Prostate gland (tissue), 2 donors: ENCODE measurements at regions of chr5 and their contacts with region 1.

Region 1: GRCh38 chr5:61331407-61332357 is at the start of gene ZSWIM6:
- DNase-seq: peak; percentile 100
- H3K4me3 ChIP-seq: peak within 1 kb of the TSS; percentile 95 to 97
- H3K27ac ChIP-seq: peak within 1 kb of the TSS; percentile 97 to 98
- H3K4me1 ChIP-seq: no peaks in the 10 kb centered on the region
- H3K27me3 ChIP-seq: no peaks in the 10 kb centered on the region
- CTCF ChIP-seq: peak in 1 of 4 experiments; percentile 14
- POLR2A ChIP-seq: peak; percentile 94
- total RNA-seq, gene ZSWIM6: 8.7 to 13.7 TPM

Region 2: DNA sequence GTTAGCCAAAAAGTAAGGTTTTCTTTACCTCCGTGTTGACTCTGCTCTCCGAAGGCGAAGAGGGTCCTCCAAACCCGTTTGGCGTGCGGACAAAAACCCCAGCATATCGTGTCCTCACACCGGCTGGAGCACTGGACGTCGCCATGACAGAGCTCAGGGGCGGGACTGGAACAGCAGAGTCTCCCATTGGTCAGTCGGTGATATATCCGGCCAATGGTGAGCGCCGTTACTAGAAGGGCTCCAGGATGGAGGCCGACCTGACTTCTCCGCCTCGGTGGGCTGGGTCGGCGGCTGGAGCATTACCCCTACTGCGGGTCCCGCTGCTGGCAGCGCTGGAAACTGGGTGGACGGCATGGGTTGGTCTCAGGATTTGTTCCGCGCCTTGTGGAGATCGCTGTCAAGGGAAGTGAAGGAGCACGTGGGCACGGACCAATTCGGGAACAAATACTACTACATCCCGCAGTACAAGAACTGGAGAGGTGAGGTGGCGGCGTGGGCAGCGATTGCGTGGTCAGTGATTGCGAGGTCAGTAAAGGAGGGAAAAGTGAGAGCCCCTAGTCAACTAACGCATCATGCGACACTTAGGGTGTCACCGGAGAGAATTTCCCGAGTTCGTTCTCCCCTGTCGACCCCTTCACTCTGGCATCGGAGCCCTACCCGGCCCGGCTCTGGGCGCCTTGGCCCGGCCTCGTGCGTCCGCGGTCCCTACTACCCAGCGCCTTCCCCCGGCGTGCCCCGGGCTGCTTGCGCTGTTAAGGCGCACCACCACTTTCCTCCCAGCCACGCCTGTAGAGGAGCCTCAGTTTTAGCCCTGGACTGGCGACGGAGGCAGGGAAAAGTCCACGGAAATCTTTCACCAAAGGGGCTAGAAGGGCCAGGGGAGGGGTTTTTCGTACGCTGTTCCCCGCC is 386.5 kb before region 1 on chr5 and contains the starts of genes ERCC8 and NDUFAF2:
- intact Hi-C with region 1: loop called (anchors 5 kb)
- DNase-seq: peak; percentile 95
- H3K4me3 ChIP-seq: peak within 1 kb of the TSS; percentile 59 to 69
- H3K27ac ChIP-seq: peak within 1 kb of the TSS; percentile 81 to 82
- H3K4me1 ChIP-seq: no peaks in the 10 kb centered on the region
- H3K27me3 ChIP-seq: no peaks in the 10 kb centered on the region
- CTCF ChIP-seq: no peak
- POLR2A ChIP-seq: peak; percentile 59
- total RNA-seq, gene ERCC8: 12.3 to 12.5 TPM
- total RNA-seq, gene NDUFAF2: 16.6 to 17.9 TPM

Region 3: DNA sequence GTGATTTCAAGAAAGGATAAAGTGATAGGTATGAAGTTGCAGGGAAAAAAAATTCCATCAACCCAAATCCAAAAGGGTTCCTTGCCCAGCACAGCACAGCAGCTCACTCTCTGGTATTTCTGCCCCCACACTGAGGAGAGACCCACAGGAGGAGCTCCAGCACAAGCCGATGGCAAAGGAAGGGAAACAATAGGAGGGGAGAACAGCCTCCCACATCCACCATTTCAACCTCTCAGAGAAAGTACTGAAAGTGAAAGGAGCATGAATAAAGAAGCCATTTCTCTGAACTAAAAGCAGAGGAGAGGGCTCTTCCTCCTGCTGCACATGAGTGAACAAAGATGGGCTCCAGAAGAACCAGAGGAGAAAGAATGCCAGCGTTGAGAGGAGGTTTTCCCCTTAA is 54.5 kb before region 1 on chr5:
- intact Hi-C with region 1: loop called (anchors 2 kb)
- DNase-seq: no peak
- H3K4me3 ChIP-seq: no peak overlapping the region
- H3K27ac ChIP-seq: no peak overlapping the region
- H3K4me1 ChIP-seq: no peaks in the 10 kb centered on the region
- H3K27me3 ChIP-seq: no peaks in the 10 kb centered on the region
- CTCF ChIP-seq: peak in 1 of 4 experiments; percentile 26
- POLR2A ChIP-seq: no peak

Region 4: DNA sequence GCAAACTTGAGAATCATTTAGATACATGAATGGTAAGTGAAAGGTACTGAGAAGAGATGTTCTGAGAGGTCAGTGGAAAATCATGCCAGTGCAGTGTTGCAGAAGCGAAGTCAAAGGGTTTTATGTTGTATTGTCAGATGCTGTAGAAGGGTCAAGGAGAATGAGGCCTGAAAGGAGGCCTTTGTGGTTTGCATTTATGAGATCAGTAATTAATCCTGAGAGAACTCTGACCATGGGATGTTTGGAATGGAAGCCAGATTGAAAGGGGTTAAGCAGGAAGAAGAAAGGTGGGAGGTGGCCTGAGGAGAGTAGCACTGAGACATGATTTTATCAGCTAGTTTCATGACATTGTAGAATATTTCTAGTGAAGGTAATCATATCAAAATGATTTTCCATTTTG is 98.2 kb after region 1 on chr5:
- intact Hi-C with region 1: loop called (anchors 5 kb)
- DNase-seq: no peak
- H3K4me3 ChIP-seq: no peak overlapping the region
- H3K27ac ChIP-seq: no peak overlapping the region
- H3K4me1 ChIP-seq: no peaks in the 10 kb centered on the region
- H3K27me3 ChIP-seq: no peaks in the 10 kb centered on the region
- CTCF ChIP-seq: no peak
- POLR2A ChIP-seq: no peak

Region 5: DNA sequence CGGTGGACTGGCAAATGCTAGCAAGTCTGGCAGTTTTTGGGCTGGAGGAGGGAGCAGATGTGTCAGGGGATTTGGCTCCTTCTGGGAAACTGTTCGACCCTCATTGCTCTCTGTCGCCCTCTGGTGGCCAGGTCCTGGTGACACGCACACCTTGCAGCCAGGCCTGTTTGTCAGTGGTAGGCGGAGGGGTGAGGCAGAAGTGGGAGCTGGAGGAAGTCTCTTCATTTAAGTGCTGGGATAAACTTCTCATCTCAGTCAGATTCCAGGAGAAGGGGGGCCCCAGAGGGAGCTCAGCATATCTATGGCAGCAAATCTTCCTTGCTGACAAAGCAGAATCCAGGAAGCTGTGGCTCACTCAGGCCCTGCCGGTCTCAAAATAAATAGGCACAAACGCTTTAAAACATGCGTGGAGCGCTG is 326.9 kb after region 1 on chr5:
- intact Hi-C with region 1: loop called (anchors 5 kb)
- DNase-seq: peak; percentile 82
- H3K4me3 ChIP-seq: no peak overlapping the region
- H3K27ac ChIP-seq: no peak overlapping the region
- H3K4me1 ChIP-seq: no peaks in the 10 kb centered on the region
- H3K27me3 ChIP-seq: no peaks in the 10 kb centered on the region
- CTCF ChIP-seq: peak; percentile 89 to 98 (median 92)
- POLR2A ChIP-seq: no peak